Dorsolateral prefrontal cortex (tissue), 120 donors: ENCODE measurements at regions of chr5 and their contacts with region 1.

Region 1: GRCh38 chr5:95646554-95647431 is at the start of gene RFESD:
- DNase-seq: peak; percentile 93 to 98 (median 96)
- H3K4me3 ChIP-seq: peak within 1 kb of the TSS; percentile 40 to 87 (median 72)
- H3K27ac ChIP-seq: peak within 1 kb of the TSS; percentile 61 to 98 (median 94)
- H3K27me3 ChIP-seq: no peaks in the 10 kb centered on the region
- CTCF ChIP-seq: peak in 47 of 56 donors; percentile 7 to 60 (median 35)
- total RNA-seq, gene RFESD: 1.0 to 7.7 (median 3.6) TPM

Region 2: GRCh38 chr5:94761786-94762185 is 885.0 kb before region 1 on chr5:
- intact Hi-C with region 1: no loop called
- DNase-seq: peak in 1 of 10 donors; percentile 39
- H3K4me3 ChIP-seq: no peak overlapping the region
- H3K27ac ChIP-seq: no peak overlapping the region
- H3K27me3 ChIP-seq: no peaks in the 10 kb centered on the region
- CTCF ChIP-seq: no peak

Region 3: GRCh38 chr5:95697781-95698681 is 51.2 kb after region 1 on chr5:
- intact Hi-C with region 1: no loop called
- DNase-seq: no peak
- H3K4me3 ChIP-seq: no peak overlapping the region
- H3K27ac ChIP-seq: no peak overlapping the region
- H3K27me3 ChIP-seq: no peaks in the 10 kb centered on the region
- CTCF ChIP-seq: no peak

Region 4: DNA sequence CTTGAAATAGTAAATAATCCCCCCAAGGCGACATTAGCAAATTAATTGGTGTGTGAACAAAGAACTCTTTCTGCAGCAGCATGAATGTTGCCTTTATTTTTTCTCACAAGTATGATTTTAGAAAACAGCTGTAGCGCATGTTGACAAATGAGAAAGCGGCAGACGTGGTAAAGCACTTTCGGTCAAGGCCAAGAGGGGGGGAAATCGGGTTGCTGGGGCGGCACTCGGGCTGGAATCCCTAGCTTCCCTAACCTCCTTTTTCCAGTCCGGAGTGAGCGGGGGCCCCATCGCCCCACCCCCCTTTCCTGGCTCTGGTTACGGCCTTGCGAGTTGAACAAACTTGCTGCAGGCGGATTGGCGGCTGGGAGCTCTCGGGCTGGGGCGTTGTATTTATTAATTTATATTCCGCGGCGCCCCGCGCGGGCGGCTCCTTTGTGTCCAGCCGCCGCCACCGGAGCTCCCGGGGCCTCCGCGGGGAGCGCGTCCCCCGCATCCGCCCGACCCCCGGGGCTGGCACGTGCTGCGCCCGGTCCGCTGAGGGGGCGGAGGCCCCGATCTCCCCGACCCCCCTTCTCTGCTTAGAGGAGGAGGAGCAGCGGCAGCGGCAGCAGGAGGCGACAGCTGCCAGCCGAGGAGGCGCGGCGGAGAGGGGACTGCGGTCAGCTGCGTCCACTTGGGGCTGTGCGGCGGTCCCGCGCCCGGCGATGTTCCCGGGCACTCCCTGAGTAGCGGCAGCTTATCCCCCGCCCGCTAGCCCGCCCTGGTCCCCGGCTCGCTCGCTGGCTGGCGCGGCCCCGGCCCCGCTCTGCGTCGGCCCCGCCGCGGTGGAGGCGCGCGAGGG is 84.2 kb after region 1 on chr5 and contains the start of gene RHOBTB3:
- intact Hi-C with region 1: loop called (anchors 2 to 5 kb)
- DNase-seq: peak; percentile 69 to 91 (median 88)
- H3K4me3 ChIP-seq: peak within 1 kb of the TSS; percentile 58 to 94 (median 85)
- H3K27ac ChIP-seq: peak within 1 kb of the TSS; percentile 79 to 98 (median 95)
- H3K27me3 ChIP-seq: no peaks in the 10 kb centered on the region
- CTCF ChIP-seq: peak in 23 of 56 donors; percentile 2 to 38 (median 16)
- total RNA-seq, gene RHOBTB3: 78.4 to 315 (median 137) TPM

Region 5: GRCh38 chr5:95835682-95836385 is 189.0 kb after region 1 on chr5:
- intact Hi-C with region 1: loop called in 1 of 2 experiments (anchors 5 kb)
- DNase-seq: no peak
- H3K4me3 ChIP-seq: peak overlapping the region in 54 of 59 donors; percentile 3 to 81 (median 66)
- H3K27ac ChIP-seq: peak overlapping the region in 57 of 59 donors; percentile 43 to 94 (median 83)
- H3K27me3 ChIP-seq: no peaks in the 10 kb centered on the region
- CTCF ChIP-seq: no peak

Region 6: DNA sequence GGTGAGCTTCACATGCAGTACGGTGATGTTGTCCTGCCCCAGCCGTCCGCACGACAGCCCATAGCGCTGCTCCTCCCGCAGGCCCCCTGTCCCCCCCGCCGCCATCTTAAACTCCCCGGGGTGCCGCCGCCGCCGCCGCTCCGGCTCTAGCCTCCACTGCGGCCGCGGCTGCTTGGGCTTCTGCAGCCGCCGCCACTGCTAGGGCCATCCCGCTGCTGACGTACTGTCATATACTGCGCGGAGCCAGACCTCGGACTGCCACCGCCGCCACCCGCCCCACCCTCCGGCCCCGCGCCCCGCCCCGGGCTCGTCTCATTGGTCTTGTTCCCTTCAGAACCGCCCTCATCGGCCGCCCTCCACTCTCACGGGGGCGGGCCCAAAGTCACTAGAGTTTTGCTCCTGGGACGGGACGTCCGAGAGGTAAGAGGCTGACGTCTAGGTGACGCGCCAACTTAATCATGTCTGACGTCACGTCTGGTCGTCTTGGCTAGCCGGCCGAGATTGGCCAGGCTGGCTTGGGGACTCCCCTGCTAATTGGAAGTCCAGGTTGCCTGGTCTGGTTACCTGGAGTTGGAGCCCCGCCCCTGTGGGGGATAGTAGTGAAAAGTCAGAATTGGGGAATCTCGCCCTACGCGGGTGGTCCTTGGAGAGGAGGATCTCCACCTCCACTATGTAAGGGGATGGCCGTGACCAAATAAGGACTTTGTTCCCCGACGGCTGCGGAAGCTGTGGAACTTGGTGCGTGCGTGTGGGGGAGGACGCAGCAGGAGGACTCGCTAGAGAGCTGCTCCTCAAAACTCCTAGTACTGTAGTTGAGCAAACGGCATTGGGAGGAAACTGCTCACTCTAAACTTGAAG is 315.1 kb after region 1 on chr5 and contains the start of gene ELL2:
- intact Hi-C with region 1: no loop called
- DNase-seq: peak; percentile 90 to 98 (median 96)
- H3K4me3 ChIP-seq: peak within 1 kb of the TSS; percentile 58 to 99 (median 91)
- H3K27ac ChIP-seq: peak within 1 kb of the TSS; percentile 84 to 99 (median 97)
- H3K27me3 ChIP-seq: no peaks in the 10 kb centered on the region
- CTCF ChIP-seq: peak in 4 of 56 donors; percentile 5 to 37 (median 29)
- total RNA-seq, gene ELL2: 53.4 to 211 (median 88.7) TPM

Region 7: GRCh38 chr5:96336351-96336985 is 689.7 kb after region 1 on chr5:
- intact Hi-C with region 1: loop called (anchors 5 to 10 kb)
- DNase-seq: peak in 7 of 10 donors; percentile 49 to 90 (median 60)
- H3K4me3 ChIP-seq: peak overlapping the region in 13 of 59 donors; percentile 8 to 42 (median 21)
- H3K27ac ChIP-seq: peak overlapping the region in 27 of 59 donors; percentile 0 to 73 (median 31)
- H3K27me3 ChIP-seq: no peaks in the 10 kb centered on the region
- CTCF ChIP-seq: peak; percentile 79 to 97 (median 92)